ENCODE measurements at regions of chr2 and their contacts with region 1.

Region 1: DNA sequence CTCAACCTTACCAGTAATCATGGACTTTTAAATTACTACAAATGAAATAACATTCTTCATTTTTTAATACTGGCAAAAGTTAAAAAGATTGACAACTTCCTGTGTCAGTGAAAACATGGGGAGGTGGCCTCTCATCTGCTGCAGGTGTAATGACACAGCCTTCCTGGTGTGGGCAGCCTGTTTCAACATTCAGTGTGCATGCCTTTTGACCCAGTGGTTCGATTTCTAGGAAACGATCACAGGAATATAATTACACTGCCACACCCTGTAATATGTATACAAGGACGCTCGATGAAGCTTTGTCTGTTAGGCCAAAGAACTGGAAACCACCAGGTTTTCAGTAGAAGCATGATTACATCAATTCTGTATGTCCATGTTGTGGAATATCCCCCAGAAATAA is 68.7 kb downstream of the MTHFD2 start:
- DNase-seq: peak in 8 of 9 donors; percentile 41 to 77 (median 66)
- ATAC-seq: peak; percentile 95
- H3K4me3 ChIP-seq: peak overlapping the region; percentile 1
- H3K4me3 Mint-ChIP-seq: peak overlapping the region; percentile 39 to 77 (median 72)
- H3K27ac ChIP-seq: peak overlapping the region; percentile 25
- H3K27ac Mint-ChIP-seq: peak overlapping the region; percentile 9 to 90 (median 80)
- H3K4me1 ChIP-seq: peaks cover 7 to 14% of the 10 kb centered on the region in 2 donors
- H3K4me1 Mint-ChIP-seq: peaks cover 10 to 37% (median 22%) of the 10 kb centered on the region in 7 donors
- H3K27me3 ChIP-seq: no peaks in the 10 kb centered on the region
- H3K27me3 Mint-ChIP-seq: no peaks in the 10 kb centered on the region

Region 2: GRCh38 chr2:73588177-73588576 is 678.9 kb before region 1 on chr2:
- CTCF ChIA-PET with region 1: no interaction called
- POLR2A ChIA-PET with region 1: no interaction called
- intact Hi-C with region 1: no loop called
- DNase-seq: no peak
- ATAC-seq: no peak
- H3K4me3 ChIP-seq: no peak overlapping the region
- H3K4me3 Mint-ChIP-seq: no peak overlapping the region
- H3K27ac ChIP-seq: no peak overlapping the region
- H3K27ac Mint-ChIP-seq: peak overlapping the region in 1 of 9 donors; percentile 13
- H3K4me1 ChIP-seq: no peaks in the 10 kb centered on the region
- H3K4me1 Mint-ChIP-seq: peaks cover 0 to 17% (median 9%) of the 10 kb centered on the region in 7 donors
- H3K27me3 ChIP-seq: no peaks in the 10 kb centered on the region
- H3K27me3 Mint-ChIP-seq: no peaks in the 10 kb centered on the region

Region 3: DNA sequence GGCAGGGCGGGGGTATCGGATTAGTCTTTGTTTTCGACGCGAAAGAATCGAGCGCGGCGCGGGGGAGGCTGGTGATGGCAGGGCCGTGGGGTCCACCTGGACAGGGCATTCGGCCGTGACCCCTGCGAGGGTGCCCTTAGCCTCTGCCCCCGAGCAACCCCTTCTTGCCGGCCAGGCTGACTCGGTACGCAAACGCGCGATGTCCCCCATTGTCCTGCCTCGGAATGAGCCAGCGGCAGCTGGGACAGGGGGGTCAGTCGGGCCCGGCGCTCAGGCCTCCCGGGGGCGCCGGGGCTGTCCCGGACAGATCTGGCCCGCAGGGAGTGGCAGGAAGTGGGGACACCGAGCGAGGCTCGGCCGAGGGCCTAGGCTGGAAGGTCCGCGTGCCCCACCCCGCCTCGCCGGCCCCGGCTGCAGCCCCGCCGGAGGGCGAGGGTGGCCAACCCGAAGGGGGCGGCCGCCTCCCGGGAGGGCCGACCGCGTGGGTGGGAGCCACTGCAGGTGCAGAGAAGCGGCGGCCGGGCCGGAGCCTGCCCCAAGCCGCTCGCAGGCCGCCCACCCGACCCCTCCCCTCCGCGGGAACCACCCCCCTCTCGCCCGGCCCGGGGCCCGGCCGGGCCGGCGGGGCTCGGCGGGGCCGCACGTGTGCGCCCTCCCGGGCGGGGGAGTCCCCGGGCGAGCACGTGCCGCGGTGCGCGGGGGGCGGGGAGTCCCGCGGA is 282.7 kb before region 1 on chr2 and contains the start of gene TET3:
- CTCF ChIA-PET with region 1: no interaction called
- POLR2A ChIA-PET with region 1: no interaction called
- intact Hi-C with region 1: no loop called
- DNase-seq: peak in 4 of 9 donors; percentile 18 to 67 (median 46)
- ATAC-seq: peak; percentile 74
- H3K4me3 ChIP-seq: peak within 1 kb of the TSS; percentile 62
- H3K4me3 Mint-ChIP-seq: peak within 1 kb of the TSS; percentile 86 to 93 (median 90)
- H3K27ac ChIP-seq: peak within 1 kb of the TSS; percentile 90
- H3K27ac Mint-ChIP-seq: peak within 1 kb of the TSS; percentile 87 to 96 (median 90)
- H3K4me1 ChIP-seq: peaks cover 51 to 67% of the 10 kb centered on the region in 2 donors
- H3K4me1 Mint-ChIP-seq: peaks cover 67 to 85% (median 81%) of the 10 kb centered on the region in 7 donors
- H3K27me3 ChIP-seq: no peaks in the 10 kb centered on the region
- H3K27me3 Mint-ChIP-seq: peaks cover 0 to 28% (median 0%) of the 10 kb centered on the region in 5 donors
- total RNA-seq, gene TET3: 19.1 to 38.6 (median 28.6) TPM

Region 4: DNA sequence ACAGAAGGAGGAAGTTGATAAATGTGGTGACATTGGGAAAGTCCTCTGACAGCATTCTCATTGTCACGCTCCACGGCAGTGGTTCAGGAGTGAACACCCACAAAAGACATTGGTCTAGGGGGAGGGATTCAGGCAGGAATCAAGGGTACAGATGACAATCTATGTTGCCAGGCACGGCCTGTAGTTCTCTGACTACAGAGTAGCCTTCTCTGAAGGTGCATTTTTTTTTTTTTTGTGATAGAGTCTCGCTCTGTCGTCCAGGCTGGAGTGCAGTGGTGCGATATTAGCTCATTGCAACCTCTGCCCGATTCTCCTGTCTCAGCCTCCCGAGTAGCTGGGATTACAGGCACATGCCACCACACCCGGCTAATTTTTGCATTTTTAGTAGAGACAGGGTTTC is 81.0 kb before region 1 on chr2:
- CTCF ChIA-PET with region 1: no interaction called
- POLR2A ChIA-PET with region 1: no interaction called
- intact Hi-C with region 1: no loop called
- DNase-seq: peak in 4 of 9 donors; percentile 24 to 58 (median 41)
- ATAC-seq: peak; percentile 94
- H3K4me3 ChIP-seq: no peak overlapping the region
- H3K4me3 Mint-ChIP-seq: peak overlapping the region in 2 of 10 donors; percentile 21 to 81
- H3K27ac ChIP-seq: no peak overlapping the region
- H3K27ac Mint-ChIP-seq: peak overlapping the region in 2 of 9 donors; percentile 10 to 96
- H3K4me1 ChIP-seq: no peaks in the 10 kb centered on the region
- H3K4me1 Mint-ChIP-seq: peaks cover 0 to 40% (median 3%) of the 10 kb centered on the region in 7 donors
- H3K27me3 ChIP-seq: no peaks in the 10 kb centered on the region
- H3K27me3 Mint-ChIP-seq: no peaks in the 10 kb centered on the region

Region 5: GRCh38 chr2:74290466-74291217 is 23.6 kb after region 1 on chr2:
- CTCF ChIA-PET with region 1: no interaction called
- POLR2A ChIA-PET with region 1: interaction called, 4 read pairs
- intact Hi-C with region 1: loop called (anchors 1 to 2 kb)
- DNase-seq: peak in 8 of 9 donors; percentile 11 to 73 (median 57)
- ATAC-seq: peak; percentile 82
- H3K4me3 ChIP-seq: peak overlapping the region; percentile 27
- H3K4me3 Mint-ChIP-seq: peak overlapping the region; percentile 42 to 90 (median 76)
- H3K27ac ChIP-seq: peak overlapping the region; percentile 72
- H3K27ac Mint-ChIP-seq: peak overlapping the region; percentile 74 to 96 (median 91)
- H3K4me1 ChIP-seq: peaks cover 17 to 25% of the 10 kb centered on the region in 2 donors
- H3K4me1 Mint-ChIP-seq: peaks cover 12 to 35% (median 25%) of the 10 kb centered on the region in 7 donors
- H3K27me3 ChIP-seq: no peaks in the 10 kb centered on the region
- H3K27me3 Mint-ChIP-seq: no peaks in the 10 kb centered on the region

Region 6: DNA sequence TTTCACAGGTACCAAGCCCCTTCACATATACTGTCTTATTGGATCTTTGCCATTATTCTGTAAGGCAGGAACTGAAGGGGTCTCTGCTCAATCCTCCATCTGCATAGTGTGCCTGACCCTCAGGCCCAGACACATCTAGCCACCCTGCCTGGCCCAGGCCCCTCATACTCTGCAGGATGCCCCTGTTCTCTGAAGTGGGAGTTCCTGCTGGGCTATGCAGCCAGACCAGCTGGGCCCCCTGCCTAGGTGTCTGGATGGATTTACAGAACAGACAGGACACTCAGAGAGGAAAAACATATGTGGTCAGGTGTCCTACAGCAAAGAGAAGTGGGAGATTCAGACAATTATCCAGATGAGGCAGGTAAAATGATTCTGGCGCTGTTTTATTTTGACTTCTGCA is 34.2 kb after region 1 on chr2:
- CTCF ChIA-PET with region 1: no interaction called
- POLR2A ChIA-PET with region 1: no interaction called
- intact Hi-C with region 1: no loop called
- DNase-seq: no peak
- ATAC-seq: no peak
- H3K4me3 ChIP-seq: no peak overlapping the region
- H3K4me3 Mint-ChIP-seq: no peak overlapping the region
- H3K27ac ChIP-seq: no peak overlapping the region
- H3K27ac Mint-ChIP-seq: no peak overlapping the region
- H3K4me1 ChIP-seq: no peaks in the 10 kb centered on the region
- H3K4me1 Mint-ChIP-seq: peaks cover 0 to 1% (median 0%) of the 10 kb centered on the region in 7 donors
- H3K27me3 ChIP-seq: no peaks in the 10 kb centered on the region
- H3K27me3 Mint-ChIP-seq: no peaks in the 10 kb centered on the region

Region 7: GRCh38 chr2:74334931-74335333 is 67.9 kb after region 1 on chr2:
- CTCF ChIA-PET with region 1: interaction called, 33 read pairs
- POLR2A ChIA-PET with region 1: interaction called, 7 read pairs
- intact Hi-C with region 1: loop called (anchors 1 kb)
- DNase-seq: peak; percentile 36 to 81 (median 67)
- ATAC-seq: peak; percentile 90
- H3K4me3 ChIP-seq: no peak overlapping the region
- H3K4me3 Mint-ChIP-seq: no peak overlapping the region
- H3K27ac ChIP-seq: no peak overlapping the region
- H3K27ac Mint-ChIP-seq: peak overlapping the region in 2 of 9 donors; percentile 62 to 77
- H3K4me1 ChIP-seq: peaks cover 0 to 5% of the 10 kb centered on the region in 2 donors
- H3K4me1 Mint-ChIP-seq: peaks cover 0 to 14% (median 4%) of the 10 kb centered on the region in 7 donors
- H3K27me3 ChIP-seq: no peaks in the 10 kb centered on the region
- H3K27me3 Mint-ChIP-seq: peaks cover 0 to 2% (median 0%) of the 10 kb centered on the region in 5 donors

Region 8: DNA sequence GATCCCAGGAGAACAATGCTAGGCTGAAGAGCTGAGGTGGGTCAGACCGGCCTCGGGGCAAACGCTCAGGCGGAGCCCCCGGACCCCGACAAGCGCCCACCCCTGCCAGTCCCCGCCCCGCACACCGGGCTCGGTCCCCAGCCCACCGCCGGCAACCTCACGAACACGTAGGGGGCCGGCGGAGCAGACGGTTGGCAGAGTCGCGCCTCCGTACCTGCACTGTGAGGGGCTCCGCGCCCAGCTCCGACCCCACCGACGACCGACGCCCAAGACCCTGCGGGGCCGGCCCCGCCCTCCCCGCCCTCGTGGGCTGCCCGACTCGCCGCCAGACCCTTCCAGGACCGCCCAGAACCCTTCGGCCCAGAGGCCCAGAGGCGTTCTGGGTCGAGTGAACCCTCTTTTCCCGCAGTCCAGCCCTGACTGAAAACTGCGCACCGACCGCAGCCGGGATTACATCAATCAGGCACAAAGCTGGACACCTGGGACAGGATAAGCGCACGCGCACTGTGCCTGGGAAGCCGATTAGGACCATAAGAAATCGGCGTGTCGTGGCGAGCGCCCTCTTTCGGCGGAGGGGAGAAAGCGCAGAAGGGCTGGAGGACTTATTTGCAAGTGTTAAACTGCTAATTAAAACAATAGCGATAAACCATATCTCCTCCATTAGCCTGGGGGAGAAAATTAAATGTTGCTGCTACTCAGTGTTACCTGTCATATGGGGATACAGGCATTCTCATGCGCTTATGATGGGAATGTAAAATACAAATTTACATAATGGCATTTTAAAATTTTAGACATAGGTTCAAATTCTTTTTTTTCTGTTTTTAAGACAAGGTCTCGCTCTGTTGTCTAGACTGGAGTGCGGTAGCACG is 124.7 kb after region 1 on chr2:
- CTCF ChIA-PET with region 1: interaction called, 6 read pairs
- POLR2A ChIA-PET with region 1: no interaction called
- intact Hi-C with region 1: loop called (anchors 1 to 5 kb)
- DNase-seq: peak; percentile 89 to 99 (median 93)
- ATAC-seq: peak; percentile 97
- H3K4me3 ChIP-seq: peak overlapping the region; percentile 78
- H3K4me3 Mint-ChIP-seq: peak overlapping the region in 4 of 10 donors; percentile 40 to 100 (median 92)
- H3K27ac ChIP-seq: peak overlapping the region; percentile 91
- H3K27ac Mint-ChIP-seq: peak overlapping the region in 8 of 9 donors; percentile 98 to 100 (median 99)
- H3K4me1 ChIP-seq: peaks cover 8 to 25% of the 10 kb centered on the region in 2 donors
- H3K4me1 Mint-ChIP-seq: peaks cover 0 to 15% (median 5%) of the 10 kb centered on the region in 7 donors
- H3K27me3 ChIP-seq: no peaks in the 10 kb centered on the region
- H3K27me3 Mint-ChIP-seq: peaks cover 0 to 14% (median 5%) of the 10 kb centered on the region in 5 donors

Region 9: DNA sequence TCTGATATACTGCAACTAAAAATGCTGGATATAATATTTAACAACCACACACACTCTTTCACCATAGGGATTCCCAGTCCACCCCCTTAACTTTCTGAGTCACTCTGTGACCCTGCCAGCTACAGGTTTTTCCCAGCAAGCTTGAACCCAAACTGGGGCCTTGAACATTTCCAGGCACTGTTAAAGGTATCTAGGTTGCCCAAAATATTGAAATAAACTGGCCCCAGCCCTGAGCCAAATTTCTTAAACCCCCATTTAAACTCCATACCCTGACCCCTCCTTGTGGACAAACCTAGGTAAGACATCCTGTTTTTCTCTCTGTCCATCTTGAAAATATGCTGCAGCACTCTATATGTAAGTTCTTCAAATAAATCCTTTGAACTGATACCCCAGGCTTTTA is 132.7 kb after region 1 on chr2:
- CTCF ChIA-PET with region 1: no interaction called
- POLR2A ChIA-PET with region 1: no interaction called
- intact Hi-C with region 1: loop called (anchors 1 to 5 kb)
- DNase-seq: peak in 5 of 9 donors; percentile 36 to 47 (median 42)
- ATAC-seq: peak; percentile 86
- H3K4me3 ChIP-seq: no peak overlapping the region
- H3K4me3 Mint-ChIP-seq: no peak overlapping the region
- H3K27ac ChIP-seq: no peak overlapping the region
- H3K27ac Mint-ChIP-seq: peak overlapping the region in 2 of 9 donors; percentile 8 to 28
- H3K4me1 ChIP-seq: no peaks in the 10 kb centered on the region
- H3K4me1 Mint-ChIP-seq: peaks cover 0 to 6% (median 5%) of the 10 kb centered on the region in 7 donors
- H3K27me3 ChIP-seq: no peaks in the 10 kb centered on the region
- H3K27me3 Mint-ChIP-seq: peaks cover 0 to 21% (median 4%) of the 10 kb centered on the region in 5 donors

Measured in naive thymus-derived CD4-positive, alpha-beta T cell (primary cell).